ENCODE measurements at regions of chr1 and their contacts with region 1.

Region 1: DNA sequence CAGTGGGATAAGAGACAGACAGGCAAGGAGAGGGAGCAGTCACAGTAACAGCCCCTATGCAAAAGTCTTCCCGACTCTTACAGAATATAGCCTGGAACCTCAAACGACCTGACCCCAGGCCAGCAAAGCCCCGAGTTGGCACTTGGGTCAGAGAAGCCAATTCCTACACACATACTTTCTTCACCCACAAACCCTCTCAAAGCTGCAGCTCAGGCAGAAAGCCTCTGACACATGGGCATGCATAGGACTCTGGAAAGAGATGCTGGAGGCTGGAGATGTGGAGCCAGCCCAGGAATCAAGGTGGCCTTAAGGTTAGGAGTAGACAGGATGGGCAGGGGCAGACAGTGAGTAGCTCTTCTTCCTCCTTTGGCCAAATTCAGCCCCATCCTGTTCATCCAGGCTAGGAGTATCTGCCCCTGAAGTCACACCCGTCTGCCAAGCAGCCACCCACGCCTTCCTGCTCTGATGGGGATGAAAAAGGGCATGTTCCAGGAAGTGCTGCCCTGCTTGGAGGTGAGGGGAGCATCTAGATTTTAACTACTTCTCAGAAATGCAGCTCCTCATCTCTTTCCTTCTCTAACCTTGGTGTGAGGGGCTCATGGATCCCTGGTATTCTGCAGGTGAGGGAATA is 7.8 kb downstream of the SLC41A1 start:
- DNase-seq: no peak

Region 2: GRCh38 chr1:205913451-205914155 is 108.4 kb after region 1 on chr1:
- in situ Hi-C with region 1: loop called (anchors 5 kb)
- DNase-seq: peak; percentile 85

Region 3: DNA sequence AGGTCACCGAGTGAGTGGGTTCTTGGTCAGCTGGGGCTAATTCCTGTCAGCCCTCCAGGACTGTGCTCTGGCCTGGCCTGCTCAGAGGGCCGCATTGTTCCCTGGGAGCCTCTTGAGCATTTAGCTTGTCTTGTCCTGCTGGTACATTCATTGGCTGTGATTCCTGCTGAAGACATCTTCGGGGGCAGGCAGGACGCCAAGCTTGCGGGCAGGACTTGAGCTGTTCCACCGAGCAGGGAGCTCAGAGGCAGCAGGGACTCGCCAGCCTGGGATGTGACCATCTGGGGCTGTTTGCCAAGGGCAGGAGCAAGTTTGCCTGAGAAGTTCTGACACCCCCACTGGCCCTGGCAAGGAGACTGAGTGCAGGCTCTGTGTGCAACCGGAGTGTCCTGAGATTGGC is 145.1 kb after region 1 on chr1:
- in situ Hi-C with region 1: no loop called
- DNase-seq: peak; percentile 61

Measured in G401 (cell line).